CD4-positive, alpha-beta memory T cell (primary cell): ENCODE measurements at regions of chr19 and their contacts with region 1.

Region 1: GRCh38 chr19:50383852-50384684 is at the start of gene POLD1:
- DNase-seq: peak; percentile 98 to 99 (median 99)
- H3K4me3 ChIP-seq: peak within 1 kb of the TSS; percentile 38 to 80
- H3K4me3 Mint-ChIP-seq: peak within 1 kb of the TSS; percentile 91 to 97 (median 94)
- H3K27ac ChIP-seq: peak within 1 kb of the TSS; percentile 67
- H3K27ac Mint-ChIP-seq: peak within 1 kb of the TSS; percentile 91 to 98 (median 94)
- H3K4me1 ChIP-seq: peaks cover 16% of the 10 kb centered on the region
- H3K4me1 Mint-ChIP-seq: peaks cover 22 to 39% (median 32%) of the 10 kb centered on the region in 4 donors
- H3K27me3 ChIP-seq: no peaks in the 10 kb centered on the region
- H3K27me3 Mint-ChIP-seq: no peaks in the 10 kb centered on the region
- total RNA-seq, gene POLD1: 40.4 to 41.1 TPM

Region 2: GRCh38 chr19:50333035-50333736 is 50.9 kb before region 1 on chr19:
- CTCF ChIA-PET with region 1: no interaction called
- POLR2A ChIA-PET with region 1: interaction called, 8 read pairs
- intact Hi-C with region 1: loop called (anchors 5 kb)
- DNase-seq: peak in 4 of 5 donors; percentile 88 to 94 (median 92)
- H3K4me3 ChIP-seq: peak overlapping the region; percentile 67 to 76
- H3K4me3 Mint-ChIP-seq: peak overlapping the region; percentile 82 to 97 (median 92)
- H3K27ac ChIP-seq: peak overlapping the region; percentile 3
- H3K27ac Mint-ChIP-seq: peak overlapping the region; percentile 69 to 98 (median 95)
- H3K4me1 ChIP-seq: peaks cover 51% of the 10 kb centered on the region
- H3K4me1 Mint-ChIP-seq: peaks cover 28 to 62% (median 41%) of the 10 kb centered on the region in 4 donors
- H3K27me3 ChIP-seq: peaks cover 17% of the 10 kb centered on the region
- H3K27me3 Mint-ChIP-seq: peaks cover 14 to 38% of the 10 kb centered on the region in 2 donors

Region 3: DNA sequence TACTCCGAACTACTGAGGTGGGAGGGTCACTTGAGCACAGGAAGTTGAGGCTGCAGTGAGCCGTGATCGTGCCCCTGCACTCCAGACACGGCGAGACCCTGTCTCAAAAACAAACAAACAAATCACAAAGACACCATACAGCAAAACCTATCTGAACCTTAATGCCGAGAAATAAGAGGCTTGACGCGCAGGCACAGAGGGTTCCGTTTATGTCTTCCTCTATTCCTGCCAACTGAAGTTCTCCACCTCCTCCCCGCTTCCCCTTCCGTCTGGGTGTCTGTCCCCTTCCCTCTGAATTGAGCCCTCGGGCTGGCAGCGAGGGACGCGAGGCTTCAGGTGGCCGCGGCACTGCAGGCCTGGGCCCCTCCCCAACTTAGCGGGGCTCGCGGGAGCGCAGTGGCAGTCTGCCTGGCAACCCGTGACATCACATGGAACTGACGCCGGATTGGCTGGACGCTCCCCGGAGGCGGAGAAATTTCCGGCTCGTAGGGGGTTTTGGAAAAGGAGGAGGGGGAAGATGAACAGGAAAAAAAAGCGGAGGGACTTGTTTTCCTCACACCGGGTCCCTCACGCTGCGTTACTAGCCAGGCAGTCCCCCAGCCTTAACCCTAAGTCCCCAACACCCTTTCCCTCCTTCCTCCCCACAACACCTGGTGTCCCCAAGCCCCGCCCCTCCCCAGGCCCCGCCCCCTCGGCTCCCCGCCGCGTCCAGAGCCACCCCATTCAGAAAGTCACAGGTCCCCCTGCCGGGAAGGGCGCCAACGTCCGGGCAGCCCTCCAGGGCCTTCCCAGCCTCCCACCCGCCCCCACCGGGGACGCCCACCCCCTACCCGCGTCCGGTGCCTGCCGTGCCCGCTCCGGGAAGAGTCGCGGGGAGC is 47.5 kb after region 1 on chr19:
- CTCF ChIA-PET with region 1: no interaction called
- POLR2A ChIA-PET with region 1: no interaction called
- intact Hi-C with region 1: loop called (anchors 2 kb)
- DNase-seq: peak; percentile 84 to 91 (median 87)
- H3K4me3 ChIP-seq: peak overlapping the region; percentile 56 to 65
- H3K4me3 Mint-ChIP-seq: peak overlapping the region; percentile 89 to 96 (median 92)
- H3K27ac ChIP-seq: peak overlapping the region; percentile 8
- H3K27ac Mint-ChIP-seq: peak overlapping the region; percentile 55 to 96 (median 92)
- H3K4me1 ChIP-seq: peaks cover 13% of the 10 kb centered on the region
- H3K4me1 Mint-ChIP-seq: peaks cover 6 to 21% (median 12%) of the 10 kb centered on the region in 4 donors
- H3K27me3 ChIP-seq: no peaks in the 10 kb centered on the region
- H3K27me3 Mint-ChIP-seq: peaks cover 7 to 17% of the 10 kb centered on the region in 2 donors